Ovary (tissue), 10 donors: ENCODE measurements at regions of chr12 and their contacts with region 1.

Region 1: GRCh38 chr12:48165094-48165981 is 8.0 kb upstream of the ASB8 start:
- DNase-seq: no peak
- H3K4me3 ChIP-seq: no peak overlapping the region
- H3K27ac ChIP-seq: no peak overlapping the region
- H3K4me1 ChIP-seq: no peaks in the 10 kb centered on the region
- H3K27me3 ChIP-seq: no peaks in the 10 kb centered on the region
- CTCF ChIP-seq: peak; percentile 64 to 84 (median 74)
- EP300 ChIP-seq: no peak
- POLR2A ChIP-seq: no peak

Region 2: GRCh38 chr12:48084066-48084465 is 81.3 kb before region 1 on chr12:
- intact Hi-C with region 1: loop called in 3 of 4 experiments (anchors 10 kb)
- DNase-seq: no peak
- H3K4me3 ChIP-seq: no peak overlapping the region
- H3K27ac ChIP-seq: no peak overlapping the region
- H3K4me1 ChIP-seq: no peaks in the 10 kb centered on the region
- H3K27me3 ChIP-seq: no peaks in the 10 kb centered on the region
- CTCF ChIP-seq: peak in 2 of 3 donors; percentile 18 to 30
- EP300 ChIP-seq: no peak
- POLR2A ChIP-seq: no peak